RWPE1 (cell line): ENCODE measurements at regions of chr5 and their contacts with region 1.

Region 1: DNA sequence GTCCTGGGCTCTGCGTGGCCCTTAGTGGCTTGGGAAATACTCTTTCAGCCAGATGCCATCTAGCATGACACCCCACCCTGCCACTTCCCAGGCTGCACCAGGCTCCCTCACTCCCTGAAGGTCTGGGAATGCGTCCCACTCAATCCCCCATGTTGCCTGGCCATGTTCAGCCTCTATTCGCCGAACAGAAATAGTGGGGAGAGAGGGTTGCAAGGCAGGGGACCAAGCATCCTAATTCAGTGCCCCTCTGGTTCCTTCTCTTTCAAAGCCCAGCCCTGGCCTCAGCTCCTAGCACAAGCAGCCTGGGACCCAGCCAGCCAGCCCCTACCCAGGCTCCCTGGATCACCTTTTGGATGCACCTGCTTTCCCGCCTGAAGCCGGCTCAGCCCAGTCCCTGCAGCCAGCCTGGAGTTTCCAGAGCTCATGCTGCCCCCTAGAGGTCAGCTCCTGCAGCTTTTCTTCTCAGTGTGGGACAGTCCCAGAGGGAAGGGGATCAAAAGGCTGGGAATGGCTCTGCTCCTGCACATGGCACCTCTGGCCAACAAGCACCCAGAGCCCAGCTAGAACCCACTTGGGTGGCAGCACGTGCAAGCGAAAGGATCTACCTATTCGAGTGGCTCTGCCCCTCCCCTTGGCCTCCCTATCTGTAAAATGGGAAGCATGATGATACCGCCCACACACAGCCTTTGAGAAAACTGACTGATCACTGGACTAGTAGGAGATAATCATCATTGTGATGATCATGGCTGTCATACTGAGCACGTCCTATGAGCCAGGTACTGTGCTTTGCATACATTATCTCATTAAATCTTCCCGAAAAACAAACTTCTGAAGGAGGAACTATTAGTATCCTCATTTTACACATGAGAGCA is 48.7 kb upstream of the C5orf58 start:
- DNase-seq: peak; percentile 79
- H3K27ac ChIP-seq: no peak overlapping the region
- CTCF ChIP-seq: peak; percentile 87

Region 2: DNA sequence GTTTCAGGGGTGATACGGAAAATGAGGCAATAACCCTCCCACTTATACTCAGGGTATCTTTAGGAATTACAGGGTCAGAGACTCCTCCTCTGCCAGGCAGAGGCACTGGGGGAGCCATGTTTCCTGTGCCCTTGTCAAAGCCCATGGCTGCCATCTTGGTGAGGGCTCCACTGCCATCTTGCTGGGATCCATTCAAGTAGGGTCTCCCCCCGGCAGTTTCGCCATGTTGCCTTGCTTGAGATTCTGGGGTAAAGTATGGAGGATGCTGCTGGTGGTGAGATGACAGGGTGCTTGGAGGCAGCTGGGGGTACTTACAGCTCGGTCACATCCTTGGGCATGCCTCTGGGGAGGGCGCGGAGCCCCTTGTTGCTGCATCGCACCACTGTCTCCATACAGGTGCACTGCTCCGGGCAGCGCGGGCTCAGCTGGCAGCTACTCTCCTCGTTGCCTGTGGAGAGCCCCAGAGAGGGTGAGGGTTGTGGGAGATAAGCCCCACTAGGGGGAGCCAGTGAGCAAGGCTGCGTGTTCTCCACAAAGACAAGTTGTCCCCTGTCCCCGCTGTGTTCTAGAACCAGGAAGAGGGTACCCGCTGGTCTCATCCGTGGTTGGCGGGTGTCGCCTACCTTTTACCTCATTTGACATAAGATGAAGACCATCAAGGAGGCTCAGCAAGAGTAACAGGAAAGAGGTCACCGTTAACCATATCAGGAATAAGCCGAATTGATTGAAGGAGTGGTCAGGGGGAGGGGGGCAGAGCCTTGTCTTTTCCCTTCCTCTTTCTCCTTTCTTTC is 1435.9 kb before region 1 on chr5:
- CTCF ChIA-PET with region 1: no interaction called
- POLR2A ChIA-PET with region 1: no interaction called
- DNase-seq: peak; percentile 30
- H3K27ac ChIP-seq: no peak overlapping the region
- CTCF ChIP-seq: peak; percentile 42

Region 3: GRCh38 chr5:170100066-170100943 is 83.7 kb before region 1 on chr5:
- CTCF ChIA-PET with region 1: interaction called, 43 read pairs
- POLR2A ChIA-PET with region 1: no interaction called
- DNase-seq: peak; percentile 69
- H3K27ac ChIP-seq: no peak overlapping the region
- CTCF ChIP-seq: peak; percentile 70

Region 4: GRCh38 chr5:170105642-170106611 is 78.1 kb before region 1 on chr5 and contains the start of gene FOXI1:
- CTCF ChIA-PET with region 1: interaction called, 43 read pairs
- POLR2A ChIA-PET with region 1: no interaction called
- DNase-seq: no peak
- H3K27ac ChIP-seq: no peak within 1 kb of the TSS
- CTCF ChIP-seq: no peak

Region 5: GRCh38 chr5:170195961-170196360 is 11.9 kb after region 1 on chr5:
- CTCF ChIA-PET with region 1: interaction called, 11 read pairs
- POLR2A ChIA-PET with region 1: no interaction called
- DNase-seq: no peak
- H3K27ac ChIP-seq: no peak overlapping the region
- CTCF ChIP-seq: no peak